ENCODE measurements at regions of chr2 and their contacts with region 1.

Region 1: DNA sequence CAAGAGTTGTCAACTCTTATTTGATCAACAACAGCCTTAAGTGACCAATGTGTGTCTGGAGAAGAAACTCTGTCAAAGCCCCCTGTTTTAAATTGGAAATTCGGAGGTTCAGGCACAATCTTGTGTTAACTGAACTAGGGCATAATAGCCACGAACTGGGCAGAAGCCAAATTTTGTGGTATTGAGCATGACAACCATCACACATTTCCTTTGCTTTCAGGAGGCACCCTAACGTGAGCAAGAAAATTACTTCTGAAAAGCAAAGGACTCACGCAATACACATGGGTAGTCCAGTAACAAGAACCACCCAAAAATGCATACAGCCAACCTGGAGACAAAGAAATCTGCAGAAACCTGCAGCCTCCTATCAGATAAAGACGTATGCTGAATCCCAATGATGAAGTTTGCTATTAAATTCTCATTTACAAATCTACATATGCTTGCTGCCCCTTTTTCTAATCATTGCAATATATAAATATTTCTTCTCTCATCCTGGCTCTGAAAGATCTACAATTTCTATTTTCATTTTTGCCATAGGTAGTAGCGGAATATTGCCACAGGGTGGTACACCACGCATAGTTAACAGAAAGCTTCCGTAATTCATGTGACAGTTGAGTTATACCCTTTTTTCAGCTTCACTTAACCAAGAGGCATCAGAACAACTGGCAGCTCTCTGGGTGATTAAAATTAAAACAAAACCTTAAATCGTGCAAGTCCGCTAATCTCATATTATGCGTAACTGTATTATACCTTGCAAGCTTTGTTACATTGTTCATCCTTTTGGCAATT is 495.8 kb downstream of the NRXN1 start:
- DNase-seq: no peak
- H3K4me3 ChIP-seq: no peak overlapping the region
- H3K27ac ChIP-seq: no peak overlapping the region
- H3K4me1 ChIP-seq: no peaks in the 10 kb centered on the region
- H3K27me3 ChIP-seq: peaks cover 0 to 2% of the 10 kb centered on the region in 2 experiments
- CTCF ChIP-seq: peak in 1 of 2 donors; percentile 25
- POLR2A ChIP-seq: no peak

Region 2: DNA sequence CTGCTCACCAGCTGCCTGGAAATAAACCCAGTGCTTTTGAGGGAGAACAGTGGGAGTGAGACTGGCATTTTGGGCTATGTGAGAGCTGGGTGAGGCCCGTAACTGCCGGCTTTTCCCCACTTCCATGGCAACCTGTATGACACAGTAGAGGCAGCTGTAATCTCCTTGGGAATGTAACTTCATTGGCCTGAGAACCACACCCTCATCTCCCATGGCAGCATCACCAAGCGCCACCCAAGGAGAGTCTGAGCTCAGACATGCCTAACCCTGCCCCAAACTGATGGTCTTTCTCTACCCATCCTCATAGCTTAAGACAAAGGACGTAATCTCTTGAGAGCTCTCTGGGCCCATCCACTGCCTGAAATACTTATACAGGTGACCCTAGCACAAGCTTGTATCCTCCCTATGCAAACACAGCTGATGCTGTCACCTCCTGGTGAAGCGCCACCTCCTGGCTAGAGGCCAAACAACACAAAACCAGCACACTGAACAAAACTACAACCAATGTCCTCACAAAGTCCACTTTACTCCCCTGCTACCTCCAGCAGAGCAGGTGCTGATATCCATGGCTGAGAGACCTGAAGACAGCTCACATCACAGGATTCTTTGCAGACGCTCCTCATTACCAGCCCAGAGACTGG is 1259.2 kb after region 1 on chr2:
- CTCF ChIA-PET with region 1: interaction called, 17 read pairs
- POLR2A ChIA-PET with region 1: no interaction called
- dilution Hi-C with region 1: no loop called
- intact Hi-C with region 1: no loop called
- DNase-seq: peak; percentile 14
- H3K4me3 ChIP-seq: no peak overlapping the region
- H3K27ac ChIP-seq: no peak overlapping the region
- H3K4me1 ChIP-seq: no peaks in the 10 kb centered on the region
- H3K27me3 ChIP-seq: no peaks in the 10 kb centered on the region
- CTCF ChIP-seq: peak; percentile 38 to 53
- POLR2A ChIP-seq: no peak